KBM-7 (cell line): ENCODE measurements at regions of chr5 and their contacts with region 1.

Region 1: GRCh38 chr5:31809050-31809870 is 170.3 kb downstream of the PDZD2 start:
- DNase-seq: peak; percentile 55

Region 2: GRCh38 chr5:31581498-31582099 is 227.7 kb before region 1 on chr5:
- in situ Hi-C with region 1: loop called (anchors 25 kb)
- DNase-seq: peak; percentile 46